Aorta (tissue), 5 donors: ENCODE measurements at regions of chr15 and their contacts with region 1.

Region 1: DNA sequence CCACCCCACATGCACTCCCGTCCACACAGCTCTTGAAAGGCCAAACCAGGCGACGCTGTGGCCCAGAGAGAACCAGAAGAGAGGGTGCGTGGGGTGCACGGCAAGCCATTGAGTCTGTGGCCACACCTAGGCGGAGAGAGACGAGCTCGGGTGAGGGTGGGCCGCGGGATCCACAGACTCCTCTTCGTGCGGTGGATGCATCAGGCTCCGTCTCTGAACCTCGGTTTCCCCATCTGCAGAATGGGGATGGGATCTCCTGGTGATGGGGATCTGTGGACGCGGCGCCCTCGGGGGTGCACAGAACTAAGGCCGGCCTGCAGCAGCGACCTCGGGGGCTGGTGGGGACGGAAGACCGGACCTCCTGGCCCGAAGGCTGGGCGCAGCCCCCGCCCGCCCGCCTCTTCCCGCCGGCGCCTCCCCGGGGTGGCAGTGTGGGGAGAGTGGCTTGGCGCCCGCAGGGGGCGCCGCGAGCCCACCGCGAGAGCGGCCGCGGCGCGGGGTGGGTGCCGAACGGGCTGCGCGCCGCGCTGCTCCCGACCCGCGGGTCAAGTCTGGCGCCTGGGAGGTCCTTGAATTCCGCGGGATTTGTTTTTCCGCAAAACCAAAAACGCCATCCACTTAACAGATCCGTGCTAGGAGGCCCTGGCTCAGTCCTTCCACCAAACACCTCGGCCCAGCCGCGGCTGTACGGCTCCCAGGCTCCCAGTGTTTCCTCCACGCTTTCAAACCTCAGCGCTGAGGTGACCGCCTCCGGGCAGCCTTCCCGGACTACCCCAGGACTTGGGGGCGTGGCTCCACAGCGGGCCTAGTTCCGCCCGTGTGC is 13.2 kb upstream of the ADPGK start:
- DNase-seq: peak; percentile 88 to 89
- ATAC-seq: peak; percentile 91
- H3K4me3 ChIP-seq: peak overlapping the region; percentile 36 to 83
- H3K27ac ChIP-seq: no peak overlapping the region
- H3K4me1 ChIP-seq: no peaks in the 10 kb centered on the region
- H3K27me3 ChIP-seq: no peaks in the 10 kb centered on the region

Region 2: DNA sequence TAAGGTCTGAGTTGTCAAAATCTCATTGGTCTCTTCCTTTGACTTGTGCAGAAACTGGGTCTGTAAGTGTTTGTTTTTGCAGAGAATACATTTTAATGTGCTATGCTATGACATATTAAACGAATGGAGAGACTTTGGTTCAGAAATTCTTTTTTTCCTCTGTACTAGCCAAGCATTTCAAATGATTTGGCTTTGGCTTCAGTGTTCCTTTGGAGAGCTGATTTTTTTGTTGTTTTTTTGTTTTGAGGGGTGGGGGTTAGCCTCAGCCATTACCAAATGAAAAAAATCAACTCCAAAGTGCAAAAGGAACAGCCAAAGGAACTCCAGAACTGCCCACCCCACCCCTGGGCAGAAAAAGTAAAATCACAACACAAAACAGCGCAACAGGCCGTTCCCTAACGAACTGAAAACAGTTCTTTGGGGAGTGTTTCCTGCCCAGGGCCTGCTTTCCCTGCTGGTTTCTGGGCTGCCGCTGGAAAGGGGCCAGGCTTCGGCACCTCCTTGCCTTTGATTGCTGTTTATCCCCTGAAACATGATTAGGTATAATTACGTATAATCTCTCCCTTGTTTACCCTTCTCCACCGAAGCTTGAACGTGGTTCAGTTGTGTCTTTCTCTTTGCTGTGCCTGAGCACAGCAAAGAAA is 197.9 kb after region 1 on chr15:
- intact Hi-C with region 1: loop called in 1 of 2 experiments (anchors 5 kb)
- DNase-seq: peak in 1 of 2 donors; percentile 53
- ATAC-seq: peak; percentile 42
- H3K4me3 ChIP-seq: no peak overlapping the region
- H3K27ac ChIP-seq: peak overlapping the region; percentile 11 to 53
- H3K4me1 ChIP-seq: peaks cover 2 to 11% of the 10 kb centered on the region in 2 donors
- H3K27me3 ChIP-seq: no peaks in the 10 kb centered on the region

Region 3: GRCh38 chr15:73081321-73081958 is 284.7 kb after region 1 on chr15:
- intact Hi-C with region 1: loop called (anchors 2 kb)
- DNase-seq: no peak
- ATAC-seq: peak; percentile 50
- H3K4me3 ChIP-seq: no peak overlapping the region
- H3K27ac ChIP-seq: no peak overlapping the region
- H3K4me1 ChIP-seq: peaks cover 2 to 8% of the 10 kb centered on the region in 2 donors
- H3K27me3 ChIP-seq: no peaks in the 10 kb centered on the region